A673 (cell line): ENCODE measurements at regions of chr6 and their contacts with region 1.

Region 1: DNA sequence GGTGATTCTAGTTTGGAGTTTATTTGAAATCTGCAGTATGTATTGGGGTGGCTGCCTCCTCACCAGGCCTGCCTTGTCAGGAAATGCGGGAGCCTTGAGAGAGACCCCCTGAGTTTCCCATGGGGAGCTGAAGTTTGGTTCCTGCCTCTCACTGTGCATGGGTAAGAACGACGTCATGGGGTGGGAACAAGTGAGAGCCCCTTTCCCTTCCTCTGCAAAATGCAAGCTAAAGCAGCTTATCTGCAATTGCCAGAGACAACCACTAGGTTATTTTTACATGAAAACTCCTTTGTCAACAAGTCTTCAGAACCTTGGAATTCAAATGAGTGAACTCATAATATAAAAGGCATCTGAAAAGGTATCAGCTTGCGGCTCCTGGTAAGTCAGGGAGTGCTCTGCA is 58.4 kb downstream of the TMEM170B start:
- DNase-seq: peak; percentile 37
- H3K4me3 ChIP-seq: no peak overlapping the region
- H3K27ac ChIP-seq: no peak overlapping the region
- H3K4me1 ChIP-seq: no peaks in the 10 kb centered on the region
- H3K27me3 ChIP-seq: no peaks in the 10 kb centered on the region
- CTCF ChIP-seq: peak; percentile 32; the same call in 1 of the 2 replicates

Region 2: DNA sequence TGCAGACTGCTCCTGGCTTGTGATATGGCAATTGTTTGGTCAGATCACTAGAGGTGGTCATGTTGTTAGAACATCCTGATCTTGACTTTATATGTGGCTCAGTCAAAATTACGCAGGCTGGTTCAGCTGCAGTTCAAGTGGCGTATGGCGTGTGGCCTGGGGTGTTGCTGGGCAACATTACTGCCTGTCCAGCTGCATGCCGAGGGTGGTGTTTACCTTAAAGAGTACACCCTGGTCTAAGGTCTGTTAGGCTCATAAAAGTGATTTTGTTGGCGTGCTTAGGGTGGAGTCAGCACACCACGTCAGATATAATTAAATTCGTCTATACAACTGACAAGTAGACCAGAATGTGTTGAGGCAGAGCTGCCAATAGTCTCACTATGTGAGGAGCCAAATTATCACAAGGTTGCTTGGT is 307.8 kb before region 1 on chr6:
- CTCF ChIA-PET with region 1: no interaction called
- POLR2A ChIA-PET with region 1: no interaction called
- intact Hi-C with region 1: no loop called
- DNase-seq: no peak
- H3K4me3 ChIP-seq: no peak overlapping the region
- H3K27ac ChIP-seq: no peak overlapping the region
- H3K4me1 ChIP-seq: no peaks in the 10 kb centered on the region
- H3K27me3 ChIP-seq: no peaks in the 10 kb centered on the region
- CTCF ChIP-seq: no peak

Region 3: DNA sequence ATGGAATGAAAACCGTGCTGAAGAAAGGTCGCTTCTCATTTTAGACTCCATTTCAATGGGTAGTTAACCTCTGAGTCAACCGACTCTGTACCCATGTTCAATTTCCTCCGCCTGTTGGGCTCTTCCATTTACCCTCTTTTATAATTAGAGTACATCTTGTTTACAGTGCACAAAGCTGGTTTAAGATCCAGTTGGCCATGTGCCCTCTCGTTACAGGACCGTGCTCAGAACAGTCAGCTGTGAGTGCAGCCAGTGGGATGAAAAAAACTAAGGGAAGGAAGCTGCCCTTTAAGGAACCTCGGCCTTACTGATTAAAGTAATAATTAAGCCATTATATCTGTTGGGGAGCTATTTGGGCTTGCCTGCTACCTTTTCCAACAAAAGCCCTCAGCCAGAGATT is 10.4 kb after region 1 on chr6:
- CTCF ChIA-PET with region 1: interaction called, 12 read pairs
- POLR2A ChIA-PET with region 1: no interaction called
- intact Hi-C with region 1: no loop called
- DNase-seq: no peak
- H3K4me3 ChIP-seq: no peak overlapping the region
- H3K27ac ChIP-seq: no peak overlapping the region
- H3K4me1 ChIP-seq: no peaks in the 10 kb centered on the region
- H3K27me3 ChIP-seq: no peaks in the 10 kb centered on the region
- CTCF ChIP-seq: no peak